ENCODE measurements at regions of chr5 and their contacts with region 1.

Region 1: GRCh38 chr5:102681407-102681983 is 73.6 kb upstream of the PAM start:
- DNase-seq: peak; percentile 74
- ATAC-seq: peak; percentile 98
- H3K4me3 Mint-ChIP-seq: no peak overlapping the region
- H3K27ac Mint-ChIP-seq: no peak overlapping the region
- H3K4me1 Mint-ChIP-seq: no peaks in the 10 kb centered on the region
- H3K27me3 Mint-ChIP-seq: no peaks in the 10 kb centered on the region
- CTCF ChIP-seq: peak; percentile 52

Region 2: DNA sequence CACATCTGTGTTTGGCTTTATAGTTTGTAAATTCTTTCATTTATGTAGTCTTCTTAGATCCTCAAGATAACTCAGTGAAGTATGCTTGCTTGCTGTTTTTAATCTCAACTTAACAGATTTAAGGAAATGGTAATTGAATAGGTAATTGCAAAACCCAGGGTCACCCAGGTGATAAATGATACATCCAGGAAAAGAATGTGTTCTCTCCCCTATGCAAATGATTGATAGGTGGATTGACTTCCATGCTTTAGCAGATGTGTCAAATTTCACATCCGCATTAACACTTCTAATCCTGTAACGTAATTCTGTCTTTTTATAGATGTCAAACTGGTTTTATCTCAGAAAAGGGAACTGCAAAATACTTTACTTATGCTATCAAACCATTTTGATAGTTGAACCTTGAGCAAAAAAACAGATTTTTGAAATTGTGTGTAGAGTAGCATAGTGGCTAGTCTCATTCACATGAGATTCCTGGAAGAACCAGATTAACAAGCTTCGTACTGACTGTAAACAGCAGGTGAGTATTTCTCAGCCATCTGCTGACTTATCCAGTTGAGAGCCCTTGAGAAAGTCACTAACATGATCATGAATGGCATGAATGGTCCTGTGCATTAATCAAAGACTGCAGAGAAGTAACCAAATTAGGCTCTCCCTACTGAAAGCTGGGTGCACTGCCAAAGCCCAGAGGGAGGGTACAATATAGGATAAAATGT is 13.1 kb before region 1 on chr5:
- CTCF ChIA-PET with region 1: interaction called, 10 read pairs
- POLR2A ChIA-PET with region 1: no interaction called
- DNase-seq: no peak
- ATAC-seq: no peak
- H3K4me3 Mint-ChIP-seq: no peak overlapping the region
- H3K27ac Mint-ChIP-seq: no peak overlapping the region
- H3K4me1 Mint-ChIP-seq: peaks cover 29% of the 10 kb centered on the region
- H3K27me3 Mint-ChIP-seq: peaks cover 7% of the 10 kb centered on the region; the same call in 1 of the 2 replicates
- CTCF ChIP-seq: no peak

Region 3: DNA sequence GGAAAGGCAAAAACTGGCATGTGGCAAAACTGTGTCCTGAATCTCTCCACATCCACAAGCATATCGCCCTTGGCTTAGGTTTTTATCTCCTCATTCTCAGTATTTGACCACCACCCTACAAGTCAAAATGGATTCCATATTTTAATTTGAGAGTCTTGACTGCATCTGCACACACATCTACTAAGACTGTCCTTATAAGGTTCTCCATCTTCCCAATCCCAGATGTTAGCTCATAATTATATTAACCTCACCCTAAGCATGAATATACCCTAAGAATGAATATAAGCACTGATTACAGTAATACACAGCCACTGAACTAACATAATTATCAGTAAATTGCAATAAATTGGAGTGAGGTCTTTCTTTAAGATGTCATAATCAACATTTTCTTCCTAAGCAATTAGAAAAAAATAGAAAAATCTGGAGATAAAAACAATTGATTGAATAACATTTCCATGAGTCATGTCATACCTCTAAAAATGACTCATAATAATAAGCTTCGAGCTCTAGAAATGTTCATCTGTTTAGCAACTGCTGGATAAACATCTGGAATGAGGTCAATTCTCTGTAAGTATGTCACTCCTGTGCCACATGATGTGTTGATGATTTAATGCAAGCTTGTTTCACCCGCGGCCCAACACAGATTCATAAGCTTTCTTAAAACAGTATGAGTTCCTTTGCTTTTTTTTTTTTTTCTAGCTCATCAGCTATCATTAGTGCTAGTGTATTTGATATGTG is 33.8 kb after region 1 on chr5:
- CTCF ChIA-PET with region 1: no interaction called
- POLR2A ChIA-PET with region 1: no interaction called
- DNase-seq: no peak
- ATAC-seq: no peak
- H3K4me3 Mint-ChIP-seq: no peak overlapping the region
- H3K27ac Mint-ChIP-seq: no peak overlapping the region
- H3K4me1 Mint-ChIP-seq: peaks cover 15% of the 10 kb centered on the region
- H3K27me3 Mint-ChIP-seq: no peaks in the 10 kb centered on the region
- CTCF ChIP-seq: no peak

Region 4: GRCh38 chr5:102731704-102732103 is 50.2 kb after region 1 on chr5:
- CTCF ChIA-PET with region 1: no interaction called
- POLR2A ChIA-PET with region 1: no interaction called
- DNase-seq: no peak
- ATAC-seq: no peak
- H3K4me3 Mint-ChIP-seq: no peak overlapping the region
- H3K27ac Mint-ChIP-seq: no peak overlapping the region
- H3K4me1 Mint-ChIP-seq: no peaks in the 10 kb centered on the region
- H3K27me3 Mint-ChIP-seq: no peaks in the 10 kb centered on the region; the same call in 1 of the 2 replicates
- CTCF ChIP-seq: no peak

Region 5: GRCh38 chr5:103031607-103032006 is 350.1 kb after region 1 on chr5:
- CTCF ChIA-PET with region 1: interaction called, 10 read pairs
- POLR2A ChIA-PET with region 1: no interaction called
- DNase-seq: no peak
- ATAC-seq: peak; percentile 79
- H3K4me3 Mint-ChIP-seq: no peak overlapping the region
- H3K27ac Mint-ChIP-seq: no peak overlapping the region
- H3K4me1 Mint-ChIP-seq: no peaks in the 10 kb centered on the region
- H3K27me3 Mint-ChIP-seq: no peaks in the 10 kb centered on the region
- CTCF ChIP-seq: no peak

Region 6: DNA sequence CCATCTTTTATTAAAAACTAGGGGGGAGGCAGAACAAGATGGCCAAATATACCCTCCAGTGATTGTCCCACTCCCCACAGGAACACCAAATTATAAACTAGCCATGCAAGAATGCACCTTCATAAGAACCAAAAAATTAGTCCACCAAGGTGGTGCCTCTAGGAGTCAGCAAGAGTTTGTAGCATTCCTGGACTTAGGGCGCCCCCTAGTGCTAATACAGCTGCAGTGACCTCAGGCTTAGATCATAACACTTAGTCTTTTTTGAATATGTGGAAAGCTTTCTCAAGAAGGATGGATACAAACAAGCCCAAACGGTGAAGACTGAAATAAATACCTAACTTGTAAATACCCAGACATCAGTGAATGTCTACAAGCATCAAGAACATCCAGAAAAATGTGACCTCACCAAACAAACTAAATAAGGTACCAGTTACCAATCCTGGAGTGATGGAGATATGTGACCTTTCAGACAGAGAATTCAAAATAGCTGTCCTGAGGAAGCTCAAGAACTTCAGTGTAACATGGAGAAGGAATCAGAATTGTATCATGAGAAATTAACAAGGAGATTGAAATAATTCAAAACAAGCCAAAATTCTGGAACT is 457.9 kb after region 1 on chr5:
- CTCF ChIA-PET with region 1: interaction called, 10 read pairs
- POLR2A ChIA-PET with region 1: no interaction called
- DNase-seq: peak; percentile 80
- ATAC-seq: peak; percentile 96
- H3K4me3 Mint-ChIP-seq: no peak overlapping the region
- H3K27ac Mint-ChIP-seq: no peak overlapping the region
- H3K4me1 Mint-ChIP-seq: no peaks in the 10 kb centered on the region
- H3K27me3 Mint-ChIP-seq: no peaks in the 10 kb centered on the region
- CTCF ChIP-seq: peak; percentile 91